Body of pancreas (tissue), 4 donors: ENCODE measurements at regions of chr5 and their contacts with region 1.

Region 1: GRCh38 chr5:151825445-151825844 is 53.7 kb downstream of the G3BP1 start:
- DNase-seq: peak; percentile 46 to 69 (median 63)
- ATAC-seq: peak; percentile 59
- H3K4me3 ChIP-seq: no peak overlapping the region
- H3K27ac ChIP-seq: no peak overlapping the region
- H3K4me1 ChIP-seq: no peaks in the 10 kb centered on the region
- H3K27me3 ChIP-seq: no peaks in the 10 kb centered on the region
- CTCF ChIP-seq: peak; percentile 56 to 85 (median 79)
- POLR2A ChIP-seq: no peak

Region 2: DNA sequence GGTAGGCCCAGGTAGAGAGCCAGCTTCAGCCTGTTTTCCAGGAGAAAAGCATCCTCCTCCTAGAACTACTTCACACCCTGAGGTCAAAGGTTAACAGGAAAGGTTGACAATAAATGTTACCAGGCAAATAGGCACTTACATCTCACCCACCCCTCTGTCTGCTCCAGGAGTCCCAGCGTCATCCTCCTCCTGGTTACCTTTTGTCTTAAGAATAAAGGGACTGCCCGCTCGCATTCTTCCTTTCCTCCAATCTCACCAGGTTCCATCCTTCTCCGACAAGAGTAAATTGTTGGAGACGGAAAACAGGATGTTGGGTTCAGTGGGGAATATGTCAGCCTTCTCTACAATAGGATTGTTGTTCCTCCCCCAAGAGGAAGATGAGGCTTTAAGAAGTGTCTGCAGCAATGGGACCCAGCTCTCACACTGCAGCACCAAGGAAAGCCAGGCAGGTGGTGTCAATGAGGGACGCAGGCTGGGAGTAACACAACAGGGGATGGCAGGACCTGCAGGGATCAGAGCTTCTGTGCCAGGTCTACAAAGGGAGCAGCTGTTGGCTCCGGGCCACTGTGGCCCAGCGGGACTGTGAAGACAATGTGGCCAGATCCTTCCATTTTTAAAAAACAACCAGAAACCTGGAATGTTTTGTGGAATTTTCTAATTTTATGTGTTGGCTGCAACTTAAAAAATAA is 263.3 kb before region 1 on chr5:
- intact Hi-C with region 1: no loop called
- DNase-seq: no peak
- ATAC-seq: no peak
- H3K4me3 ChIP-seq: no peak overlapping the region
- H3K27ac ChIP-seq: no peak overlapping the region
- H3K4me1 ChIP-seq: no peaks in the 10 kb centered on the region
- H3K27me3 ChIP-seq: no peaks in the 10 kb centered on the region
- CTCF ChIP-seq: no peak
- POLR2A ChIP-seq: no peak

Region 3: DNA sequence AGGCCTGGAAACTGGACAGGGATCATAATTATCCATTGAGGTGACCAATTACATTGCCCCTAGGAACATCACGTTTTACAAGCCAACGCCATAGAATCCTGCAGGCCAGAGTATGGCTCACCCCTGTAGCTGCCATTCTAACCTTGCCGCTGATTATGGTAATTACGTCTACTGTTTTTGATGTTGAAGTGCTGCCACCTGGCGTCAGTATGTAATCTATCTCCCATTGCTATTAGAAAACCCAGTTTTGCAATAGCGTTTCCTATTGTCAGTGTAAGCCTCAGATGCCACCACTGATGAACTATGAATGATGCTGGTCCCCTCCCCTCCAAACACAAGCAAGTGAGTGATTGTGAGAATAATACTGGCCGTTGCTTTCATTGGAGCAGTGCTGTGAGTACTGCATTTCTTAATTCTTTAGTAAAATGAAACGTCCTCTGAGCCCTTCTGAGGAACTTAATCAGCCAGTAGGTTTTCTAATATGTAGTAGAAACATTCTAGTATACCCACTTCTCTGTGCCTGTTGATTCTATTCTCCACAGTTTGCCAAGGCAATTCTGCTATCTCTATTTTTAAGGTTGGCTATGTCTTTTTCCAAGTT is 680.1 kb after region 1 on chr5:
- intact Hi-C with region 1: loop called (anchors 10 kb)
- DNase-seq: peak; percentile 62 to 68 (median 64)
- ATAC-seq: peak; percentile 68
- H3K4me3 ChIP-seq: no peak overlapping the region
- H3K27ac ChIP-seq: no peak overlapping the region
- H3K4me1 ChIP-seq: no peaks in the 10 kb centered on the region
- H3K27me3 ChIP-seq: no peaks in the 10 kb centered on the region
- CTCF ChIP-seq: peak; percentile 34 to 66 (median 57)
- POLR2A ChIP-seq: no peak